GM13976 (cell line): ENCODE measurements at regions of chr11 and their contacts with region 1.

Region 1: DNA sequence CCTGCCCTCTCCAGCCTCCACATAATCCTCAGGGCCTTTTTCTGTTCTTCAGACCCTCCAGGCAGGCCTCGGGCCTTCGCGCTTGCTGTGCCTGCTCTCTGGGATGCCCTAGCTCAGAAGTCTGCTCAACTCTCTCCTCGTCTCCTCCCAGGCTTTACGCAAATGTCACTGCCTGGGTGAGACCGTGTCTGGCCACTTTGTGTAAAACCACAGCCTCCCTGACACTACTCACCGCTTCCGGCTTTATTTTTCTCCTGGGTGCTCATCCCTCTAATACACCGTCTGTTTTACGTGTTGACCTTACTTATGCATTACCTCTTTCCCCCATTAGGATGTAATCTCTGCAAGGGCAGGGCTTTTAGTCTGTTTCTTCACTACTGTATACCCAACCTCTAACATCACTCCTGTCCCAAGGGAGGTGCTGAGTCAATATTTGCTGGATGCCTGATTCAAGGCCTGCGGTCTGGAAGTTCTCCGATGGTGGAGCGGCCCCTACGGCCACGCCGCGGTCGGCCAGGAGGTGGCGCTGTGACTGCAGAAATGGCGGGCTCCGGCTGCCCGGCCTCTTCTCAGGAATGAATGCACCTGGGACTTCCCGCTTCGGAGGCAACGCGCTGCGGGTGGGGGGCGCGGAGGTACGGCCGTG is 58.2 kb upstream of the THY1 start:
- DNase-seq: peak; percentile 91
- CTCF ChIP-seq: peak; percentile 98

Region 2: GRCh38 chr11:119533921-119534736 is 53.0 kb after region 1 on chr11:
- in situ Hi-C with region 1: loop called (anchors 5 kb)
- DNase-seq: peak; percentile 83
- CTCF ChIP-seq: peak; percentile 64

Region 3: GRCh38 chr11:119651802-119652584 is 170.8 kb after region 1 on chr11:
- in situ Hi-C with region 1: loop called (anchors 10 kb)
- DNase-seq: no peak
- CTCF ChIP-seq: no peak

Region 4: DNA sequence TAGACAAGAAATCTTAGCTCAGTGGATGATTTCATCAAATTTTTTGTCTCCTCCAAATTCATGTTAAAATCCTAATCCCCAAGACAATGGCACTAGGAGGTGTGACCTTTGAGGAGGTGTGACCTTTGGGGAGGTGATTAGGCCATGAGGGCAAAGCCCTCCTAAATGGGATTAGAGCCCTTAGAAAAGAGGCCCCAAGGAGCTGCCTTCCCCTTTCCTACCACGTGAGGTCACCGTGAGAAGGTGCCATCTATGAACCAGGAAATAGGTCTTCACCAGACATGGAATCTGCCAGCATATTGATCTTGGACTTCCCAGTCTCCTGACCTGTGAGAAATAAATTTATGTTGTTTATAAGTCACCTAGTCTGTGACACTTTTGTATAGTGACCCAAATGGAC is 518.1 kb after region 1 on chr11:
- in situ Hi-C with region 1: no loop called
- DNase-seq: no peak
- CTCF ChIP-seq: no peak